SK-N-SH (cell line): ENCODE measurements at regions of chr19 and their contacts with region 1.

Region 1: DNA sequence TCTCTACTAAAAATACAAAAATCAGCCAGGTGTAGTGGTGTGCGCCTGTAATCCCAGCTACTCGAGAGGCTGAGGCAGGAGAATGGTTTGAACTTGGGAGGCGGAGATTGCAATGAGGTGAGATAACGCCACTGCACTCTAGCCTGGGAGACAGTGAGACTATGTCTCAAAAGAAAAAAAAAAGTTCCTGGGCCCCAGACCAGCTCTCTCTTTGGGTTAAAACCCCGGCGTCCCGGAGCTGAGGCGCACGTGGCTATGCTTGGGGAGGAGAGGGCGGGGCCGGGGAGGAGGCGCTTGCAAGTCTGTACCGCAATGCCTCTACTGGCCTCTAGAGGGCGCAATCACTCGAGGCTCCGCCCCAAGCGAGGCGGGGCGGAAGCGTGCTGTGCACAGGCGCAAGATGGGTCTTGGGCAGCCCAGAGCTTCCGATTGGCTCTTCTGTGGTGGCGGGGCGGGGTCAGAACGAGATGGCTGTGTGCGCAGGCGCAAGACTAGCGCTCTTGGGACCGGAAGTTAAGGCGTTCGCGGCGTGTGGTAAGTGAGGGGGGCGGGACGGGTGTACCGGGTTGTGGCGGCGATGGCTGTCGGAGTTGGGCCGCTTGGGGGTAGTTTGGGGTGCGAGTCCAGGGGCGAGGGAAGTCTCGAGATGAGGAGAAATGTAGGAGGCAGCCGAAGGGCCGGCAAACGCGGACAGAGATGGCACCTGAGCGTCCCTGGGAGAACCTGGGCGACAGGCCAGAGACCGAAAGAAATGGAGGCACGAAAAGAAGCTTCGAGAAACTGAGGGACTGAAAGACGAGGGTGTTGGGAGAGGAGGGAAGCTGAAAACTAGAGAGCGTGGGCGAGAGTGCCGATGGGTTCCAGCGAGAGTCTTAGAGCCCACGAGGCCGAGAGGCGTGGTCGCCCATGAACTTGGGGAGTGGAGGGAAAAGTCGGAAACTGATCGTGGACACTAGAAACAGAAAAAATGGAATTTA is at the start of gene DHX34:
- DNase-seq: peak; percentile 100
- H3K4me3 ChIP-seq: peak within 1 kb of the TSS; percentile 75 to 89
- H3K27ac ChIP-seq: peak within 1 kb of the TSS; percentile 42 to 54; a peak in 2 of 4 replicates
- H3K4me1 ChIP-seq: peaks cover 8 to 17% of the 10 kb centered on the region in 2 experiments; a peak in 2 of 4 replicates
- H3K27me3 ChIP-seq: no peaks in the 10 kb centered on the region
- CTCF ChIP-seq: peak; percentile 94
- EP300 ChIP-seq: no peak
- RAD21 ChIP-seq: 0 out of 2 replicates have a peak, but pooled peaks have one; percentile 10
- polyA plus RNA-seq, gene DHX34: 14.8 and 16.4 TPM in 2 replicates

Region 2: GRCh38 chr19:47124937-47125668 is 224.0 kb before region 1 on chr19:
- CTCF ChIA-PET with region 1: no interaction called
- POLR2A ChIA-PET with region 1: no interaction called
- DNase-seq: peak; percentile 73
- H3K4me3 ChIP-seq: no peak overlapping the region
- H3K27ac ChIP-seq: no peak overlapping the region
- H3K4me1 ChIP-seq: peaks cover 0 to 12% of the 10 kb centered on the region in 2 experiments; a peak in 2 of 4 replicates
- H3K27me3 ChIP-seq: no peaks in the 10 kb centered on the region
- CTCF ChIP-seq: peak; percentile 74
- EP300 ChIP-seq: no peak
- RAD21 ChIP-seq: peak; percentile 94

Region 3: DNA sequence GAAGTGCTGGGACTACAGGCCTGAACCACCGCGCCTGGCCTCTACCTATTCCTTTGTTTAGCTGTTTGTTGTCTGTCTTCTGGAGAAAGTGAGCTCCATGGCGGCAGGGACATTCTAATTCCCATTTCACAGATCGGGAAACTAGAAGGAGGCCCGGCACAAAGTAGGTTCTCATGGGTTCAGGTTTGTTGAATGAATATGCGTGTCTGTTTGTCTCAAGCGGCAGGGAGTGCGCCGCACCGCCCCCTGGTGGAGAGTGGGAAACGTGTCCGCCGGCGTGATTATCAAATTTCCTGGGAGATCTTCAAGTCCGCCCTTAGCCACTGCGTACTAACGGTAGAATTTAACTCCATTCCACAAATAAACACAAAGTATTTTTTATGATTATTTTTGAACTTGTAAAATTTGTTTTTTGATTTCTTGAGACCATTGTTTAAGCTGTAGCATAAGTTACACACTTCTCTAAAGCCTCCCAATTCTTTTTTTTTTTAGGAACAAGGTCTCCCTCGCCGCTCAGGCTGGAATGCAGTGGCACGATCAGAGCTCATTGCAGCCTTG is 101.7 kb before region 1 on chr19:
- CTCF ChIA-PET with region 1: no interaction called
- POLR2A ChIA-PET with region 1: no interaction called
- DNase-seq: peak; percentile 74
- H3K4me3 ChIP-seq: peak overlapping the region in 1 of 2 experiments; percentile 39; a peak in 1 of 4 replicates
- H3K27ac ChIP-seq: no peak overlapping the region
- H3K4me1 ChIP-seq: peaks cover 0 to 10% of the 10 kb centered on the region in 2 experiments; a peak in 2 of 4 replicates
- H3K27me3 ChIP-seq: no peaks in the 10 kb centered on the region
- CTCF ChIP-seq: peak; percentile 96
- EP300 ChIP-seq: no peak
- RAD21 ChIP-seq: peak; percentile 70

Region 4: DNA sequence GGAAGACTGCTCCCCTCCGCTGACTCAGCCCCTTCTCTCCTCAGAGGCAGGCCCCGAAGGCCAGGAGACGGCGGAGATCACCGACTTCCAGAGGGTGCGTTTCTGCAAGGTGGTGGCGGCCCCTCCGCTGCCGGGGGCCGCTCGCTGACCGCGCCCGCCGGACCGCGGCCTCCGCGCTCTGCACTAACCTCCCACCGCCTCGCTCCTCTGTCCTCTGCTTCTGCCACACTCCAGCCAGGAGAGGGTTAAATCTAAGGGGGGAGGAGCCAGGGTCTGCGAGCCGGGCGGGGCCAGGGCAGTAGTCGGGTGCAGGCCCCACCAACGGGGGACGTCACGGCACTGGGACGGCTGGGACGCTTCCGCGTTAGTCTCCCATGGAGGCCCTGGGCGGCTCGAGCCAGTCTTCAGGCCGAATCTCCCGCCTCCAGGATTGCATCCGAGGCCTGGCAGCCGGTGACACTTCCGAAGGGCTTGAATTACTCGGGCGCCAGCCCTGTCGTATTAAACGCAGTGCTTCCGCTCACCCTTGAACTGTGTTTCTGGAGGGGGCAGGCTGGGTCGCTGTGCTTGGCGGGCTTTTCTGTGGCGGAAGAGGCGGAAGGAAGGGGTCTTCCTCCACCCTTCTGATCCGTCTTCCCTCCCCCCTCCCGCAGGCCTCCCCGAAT is 75.7 kb before region 1 on chr19:
- CTCF ChIA-PET with region 1: interaction called, 15 read pairs
- POLR2A ChIA-PET with region 1: no interaction called
- DNase-seq: peak; percentile 98
- H3K4me3 ChIP-seq: peak overlapping the region; percentile 59 to 87
- H3K27ac ChIP-seq: peak overlapping the region; percentile 84 to 97
- H3K4me1 ChIP-seq: peaks cover 10 to 18% of the 10 kb centered on the region in 2 experiments; a peak in 3 of 4 replicates
- H3K27me3 ChIP-seq: no peaks in the 10 kb centered on the region
- CTCF ChIP-seq: no peak
- EP300 ChIP-seq: no peak
- RAD21 ChIP-seq: peak; percentile 13; the same call in 1 of the 2 replicates

Region 5: DNA sequence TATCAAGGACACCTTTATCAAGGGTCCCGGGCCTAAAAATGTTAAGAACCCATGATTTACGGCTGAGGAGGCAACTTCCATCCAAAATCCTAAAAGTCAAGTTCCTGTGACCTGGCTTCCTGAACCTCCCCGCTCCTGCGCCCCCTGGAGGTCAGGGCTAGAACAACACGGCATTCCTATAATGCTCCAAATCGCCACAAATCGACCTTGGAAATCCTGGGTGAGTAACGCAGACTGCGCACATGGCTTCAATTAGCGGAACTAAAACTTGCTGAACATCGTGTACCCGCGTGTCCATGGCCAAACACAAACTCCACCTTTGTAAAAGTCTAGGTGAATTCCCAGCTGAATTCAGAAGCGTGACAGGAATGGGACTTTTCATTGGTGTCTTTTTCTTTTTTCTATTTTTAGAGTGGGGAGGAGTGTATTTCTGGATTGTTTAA is 43.8 kb before region 1 on chr19:
- CTCF ChIA-PET with region 1: interaction called, 12 read pairs
- POLR2A ChIA-PET with region 1: no interaction called
- DNase-seq: peak; percentile 81
- H3K4me3 ChIP-seq: peak overlapping the region in 1 of 2 experiments; percentile 42; a peak in 1 of 4 replicates
- H3K27ac ChIP-seq: no peak overlapping the region
- H3K4me1 ChIP-seq: no peaks in the 10 kb centered on the region; a peak in 1 of 4 replicates
- H3K27me3 ChIP-seq: peaks cover 12% of the 10 kb centered on the region
- CTCF ChIP-seq: peak; percentile 99
- EP300 ChIP-seq: no peak
- RAD21 ChIP-seq: peak; percentile 54

Region 6: DNA sequence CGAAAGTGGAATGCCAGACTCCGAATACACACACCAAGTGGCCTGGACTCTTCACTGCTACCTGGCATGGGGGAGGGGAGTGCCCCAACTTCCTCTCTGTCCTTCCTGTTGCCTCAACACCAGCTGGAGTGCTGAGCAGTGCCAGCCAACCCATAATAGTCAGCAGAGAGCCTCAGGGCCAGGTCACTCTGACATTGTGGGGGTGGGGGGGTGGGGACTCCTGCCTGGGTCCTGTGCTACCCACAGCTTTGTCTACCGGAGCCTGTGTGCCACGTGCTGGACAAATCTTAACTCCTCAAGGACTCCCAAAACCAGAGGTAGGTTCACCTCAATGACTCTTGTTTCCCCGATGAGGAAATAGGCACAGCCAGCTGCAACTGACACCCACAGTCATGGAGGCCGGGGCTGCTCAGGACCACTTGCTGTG is 12.2 kb before region 1 on chr19:
- CTCF ChIA-PET with region 1: interaction called, 26 read pairs
- POLR2A ChIA-PET with region 1: interaction called, 3 read pairs
- DNase-seq: no peak
- H3K4me3 ChIP-seq: no peak overlapping the region
- H3K27ac ChIP-seq: no peak overlapping the region
- H3K4me1 ChIP-seq: no peaks in the 10 kb centered on the region; a peak in 1 of 4 replicates
- H3K27me3 ChIP-seq: no peaks in the 10 kb centered on the region
- CTCF ChIP-seq: no peak
- EP300 ChIP-seq: no peak
- RAD21 ChIP-seq: no peak

Region 7: GRCh38 chr19:47370045-47370611 is 21.0 kb after region 1 on chr19:
- CTCF ChIA-PET with region 1: interaction called, 21 read pairs
- POLR2A ChIA-PET with region 1: no interaction called
- DNase-seq: no peak
- H3K4me3 ChIP-seq: no peak overlapping the region
- H3K27ac ChIP-seq: no peak overlapping the region
- H3K4me1 ChIP-seq: no peaks in the 10 kb centered on the region
- H3K27me3 ChIP-seq: no peaks in the 10 kb centered on the region
- CTCF ChIP-seq: no peak
- EP300 ChIP-seq: no peak
- RAD21 ChIP-seq: no peak